Left lung (tissue), 14 donors: ENCODE measurements at regions of chr20 and their contacts with region 1.

Region 1: GRCh38 chr20:9467995-9468394 is 46.4 kb upstream of the LAMP5 start:
- DNase-seq: no peak
- ATAC-seq: no peak
- H3K4me3 ChIP-seq: no peak overlapping the region
- H3K27ac ChIP-seq: no peak overlapping the region
- H3K4me1 ChIP-seq: no peaks in the 10 kb centered on the region
- H3K27me3 ChIP-seq: no peaks in the 10 kb centered on the region
- CTCF ChIP-seq: peak; percentile 40 to 45

Region 2: GRCh38 chr20:10434467-10434831 is 966.5 kb after region 1 on chr20:
- intact Hi-C with region 1: loop called in 1 of 2 experiments (anchors 10 kb)
- DNase-seq: peak; percentile 83 to 98 (median 94)
- ATAC-seq: peak; percentile 91
- H3K4me3 ChIP-seq: peak overlapping the region; percentile 71 to 84
- H3K27ac ChIP-seq: peak overlapping the region; percentile 93
- H3K4me1 ChIP-seq: peaks cover 8 to 43% of the 10 kb centered on the region in 2 donors
- H3K27me3 ChIP-seq: no peaks in the 10 kb centered on the region
- CTCF ChIP-seq: no peak